Left cardiac atrium (tissue), 4 donors: ENCODE measurements at regions of chr5 and their contacts with region 1.

Region 1: DNA sequence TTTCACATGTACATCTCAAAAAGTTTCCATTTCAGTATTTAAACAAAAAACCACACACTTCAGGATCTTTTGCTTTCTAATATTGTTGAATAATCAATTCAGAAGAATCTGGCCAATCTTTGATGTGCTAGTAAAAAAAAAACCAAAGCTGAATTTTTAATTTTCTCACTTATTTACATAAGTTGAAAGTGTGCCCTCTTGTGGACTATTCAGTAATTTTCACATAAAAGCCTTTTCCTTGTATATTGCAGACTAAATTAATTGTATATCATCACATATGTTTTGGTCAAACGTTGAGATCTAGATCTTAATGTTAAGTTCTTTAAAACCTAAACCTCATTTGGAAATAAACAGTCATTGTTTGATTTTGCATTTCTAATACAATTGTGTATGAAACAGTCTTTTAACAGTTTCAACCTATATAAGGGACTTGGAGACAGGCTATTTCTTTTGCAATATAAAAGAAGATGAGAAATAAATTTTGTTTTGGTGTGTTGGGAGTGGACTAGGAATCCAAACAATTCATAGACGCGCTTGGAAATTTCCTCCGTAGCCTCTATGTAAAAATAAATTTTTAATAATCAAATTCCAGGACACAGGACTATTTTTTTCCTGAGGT is 68.1 kb downstream of the NIPBL start:
- DNase-seq: no peak
- ATAC-seq: no peak

Region 2: GRCh38 chr5:36875790-36876388 is 68.8 kb before region 1 on chr5:
- intact Hi-C with region 1: loop called (anchors 5 to 10 kb)
- DNase-seq: peak; percentile 86
- ATAC-seq: peak; percentile 91